ENCODE measurements at regions of chrX and their contacts with region 1.

Region 1: DNA sequence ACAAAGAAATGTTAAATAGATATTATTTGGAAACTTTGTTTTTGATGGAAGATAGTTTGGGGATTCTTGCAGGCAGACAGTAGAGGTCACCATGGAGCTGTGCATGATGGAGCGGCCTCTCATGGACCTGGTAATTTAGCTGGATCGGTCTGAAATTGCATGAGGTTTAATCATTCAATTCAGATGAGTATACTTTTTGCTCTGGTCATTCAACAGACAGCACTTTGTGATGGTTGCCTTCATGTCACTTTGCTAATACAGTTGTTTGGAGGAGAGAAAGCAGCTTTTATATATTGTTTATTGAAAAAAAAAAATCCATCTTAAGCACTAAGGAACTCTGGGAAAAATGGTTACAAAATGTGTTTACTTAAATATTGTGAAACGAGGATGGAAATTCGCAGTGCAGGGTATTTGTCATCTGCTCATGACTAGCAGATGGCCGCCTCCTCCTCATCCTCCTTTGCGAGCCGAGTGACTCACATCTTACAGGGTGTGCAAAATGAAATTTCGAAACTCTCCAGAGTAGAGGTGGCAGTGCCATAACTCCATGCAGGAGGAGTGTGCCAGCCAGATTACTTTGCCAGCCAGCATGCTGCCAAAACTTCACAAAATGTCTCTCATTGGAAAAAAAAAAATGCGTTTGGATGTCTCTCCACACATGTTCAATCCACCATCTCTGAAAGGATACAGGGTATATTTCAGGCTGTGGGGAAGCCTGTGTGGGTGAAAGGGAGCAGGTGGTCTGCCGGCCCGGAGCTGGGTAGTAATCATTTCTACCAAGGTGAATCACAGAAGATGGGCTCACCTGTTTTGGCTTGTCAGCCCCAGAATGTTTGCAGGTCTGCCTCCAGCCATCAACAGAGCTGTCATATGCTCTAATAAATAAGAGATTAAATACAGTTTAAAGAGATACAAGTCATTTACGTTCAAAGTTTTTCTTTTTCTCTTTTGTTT is 314.9 kb upstream of the DIPK2B start:
- DNase-seq: peak; percentile 56 to 95
- ATAC-seq: peak; percentile 95 to 99
- H3K4me3 ChIP-seq: peak overlapping the region; percentile 18; the same call in 1 of the 3 replicates
- H3K27ac ChIP-seq: peak overlapping the region; percentile 79 to 96
- H3K4me1 ChIP-seq: peaks cover 40% of the 10 kb centered on the region
- CTCF ChIP-seq: peak; percentile 79
- EP300 ChIP-seq: peak; percentile 91; a peak in 3 of 5 replicates
- POLR2A ChIP-seq: no peak
- RAD21 ChIP-seq: peak; percentile 90 to 91

Region 2: GRCh38 chrX:45479835-45480422 is 35.6 kb before region 1 on chrX:
- CTCF ChIA-PET with region 1: interaction called, 10 read pairs
- POLR2A ChIA-PET with region 1: interaction called, 20 read pairs
- DNase-seq: peak; percentile 55 to 96
- ATAC-seq: peak; percentile 95 to 96
- H3K4me3 ChIP-seq: no peak overlapping the region
- H3K27ac ChIP-seq: peak overlapping the region; percentile 74 to 93
- H3K4me1 ChIP-seq: peaks cover 19% of the 10 kb centered on the region
- CTCF ChIP-seq: no peak
- EP300 ChIP-seq: peak; percentile 92 to 97
- POLR2A ChIP-seq: no peak
- RAD21 ChIP-seq: peak; percentile 17 to 52; a peak in 4 of 5 replicates

Region 3: DNA sequence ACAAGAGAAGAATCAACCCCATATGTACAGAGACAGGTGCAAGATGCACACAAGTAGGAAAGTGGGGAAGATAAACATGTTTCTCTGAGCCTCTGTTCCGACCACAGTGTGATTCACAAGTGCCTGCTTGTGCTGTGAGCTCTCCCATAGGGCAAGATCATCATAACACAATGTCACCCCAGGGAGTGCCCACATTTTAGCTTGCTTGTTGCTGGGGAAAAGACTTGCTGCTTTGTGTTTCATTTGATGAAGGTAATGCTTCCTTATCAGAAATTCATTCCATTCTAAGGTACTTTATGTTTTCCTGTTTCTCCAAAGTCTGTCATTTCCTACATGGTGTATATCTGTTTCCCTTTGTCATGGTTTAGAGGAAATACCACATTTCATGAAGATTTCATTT is 10.3 kb before region 1 on chrX:
- CTCF ChIA-PET with region 1: interaction called, 11 read pairs
- POLR2A ChIA-PET with region 1: interaction called, 5 read pairs
- DNase-seq: peak in 1 of 2 experiments; percentile 31
- ATAC-seq: no peak
- H3K4me3 ChIP-seq: no peak overlapping the region
- H3K27ac ChIP-seq: peak overlapping the region; percentile 74 to 88; a peak in 5 of 6 replicates
- H3K4me1 ChIP-seq: peaks cover 33% of the 10 kb centered on the region
- CTCF ChIP-seq: no peak
- EP300 ChIP-seq: no peak
- POLR2A ChIP-seq: no peak
- RAD21 ChIP-seq: no peak

Region 4: DNA sequence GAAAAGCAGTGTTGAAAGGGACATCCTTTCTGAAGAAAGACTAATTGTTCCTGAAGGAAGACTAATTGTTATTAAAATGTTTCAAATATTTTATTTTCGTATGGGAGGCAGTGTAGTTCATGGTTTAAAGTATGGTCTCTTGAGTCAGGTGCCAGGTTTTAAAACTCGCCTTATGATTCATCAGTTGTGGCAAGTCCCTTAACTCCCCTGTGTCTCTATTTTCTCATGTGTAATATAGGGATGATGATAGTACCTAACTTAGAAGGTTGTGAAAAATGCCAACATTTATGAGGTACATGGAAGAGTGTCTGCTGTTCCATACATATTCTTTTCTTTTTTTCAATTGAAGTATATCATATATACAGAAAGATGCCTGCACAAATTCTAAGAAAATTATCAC is 99.3 kb after region 1 on chrX:
- CTCF ChIA-PET with region 1: no interaction called
- POLR2A ChIA-PET with region 1: no interaction called
- DNase-seq: no peak
- ATAC-seq: no peak
- H3K4me3 ChIP-seq: no peak overlapping the region
- H3K27ac ChIP-seq: no peak overlapping the region
- H3K4me1 ChIP-seq: no peaks in the 10 kb centered on the region
- CTCF ChIP-seq: no peak
- EP300 ChIP-seq: no peak
- POLR2A ChIP-seq: no peak
- RAD21 ChIP-seq: no peak

Region 5: DNA sequence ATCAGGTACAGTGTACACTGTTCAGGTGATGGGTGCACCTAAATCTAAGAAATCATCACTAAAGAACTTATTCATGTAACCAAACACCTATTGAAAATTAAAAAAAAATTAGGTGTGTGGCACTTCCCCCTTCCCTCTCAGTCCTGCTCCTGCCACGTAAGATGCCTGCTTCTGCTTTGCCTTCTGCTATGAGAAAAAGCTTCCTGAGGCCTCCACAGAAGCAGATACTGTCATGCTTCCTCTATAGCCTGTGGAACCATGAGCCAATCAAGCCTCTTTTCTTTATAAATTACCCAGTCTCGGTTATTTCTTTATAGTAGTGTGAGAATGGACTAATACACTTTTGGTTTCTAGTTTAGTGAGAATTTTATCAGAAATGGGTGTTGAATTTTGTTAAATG is 144.9 kb after region 1 on chrX:
- CTCF ChIA-PET with region 1: no interaction called
- POLR2A ChIA-PET with region 1: no interaction called
- DNase-seq: no peak
- ATAC-seq: no peak
- H3K4me3 ChIP-seq: no peak overlapping the region
- H3K27ac ChIP-seq: no peak overlapping the region
- H3K4me1 ChIP-seq: no peaks in the 10 kb centered on the region
- CTCF ChIP-seq: no peak
- EP300 ChIP-seq: no peak
- POLR2A ChIP-seq: no peak
- RAD21 ChIP-seq: no peak

Region 6: DNA sequence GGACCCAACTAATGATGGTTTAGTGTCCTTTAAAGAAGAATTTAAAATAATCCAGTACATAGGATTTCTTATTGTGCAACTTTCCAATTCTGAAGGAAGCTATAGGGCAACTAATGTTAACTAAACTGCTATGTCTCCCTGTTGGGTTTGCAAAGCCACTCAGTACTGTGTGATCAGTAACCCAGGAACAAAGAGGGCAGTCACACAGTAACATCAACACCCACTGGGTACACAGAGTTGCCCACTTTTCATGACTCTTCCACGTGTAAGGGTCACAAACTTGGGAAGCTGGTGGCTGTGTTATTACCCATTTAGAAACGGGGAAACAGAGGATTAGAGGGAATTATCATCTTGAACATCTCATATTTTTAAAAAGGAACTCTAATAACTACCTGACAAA is 240.2 kb after region 1 on chrX:
- CTCF ChIA-PET with region 1: interaction called, 10 read pairs
- POLR2A ChIA-PET with region 1: interaction called, 3 read pairs
- DNase-seq: no peak
- ATAC-seq: no peak
- H3K4me3 ChIP-seq: no peak overlapping the region
- H3K27ac ChIP-seq: peak overlapping the region in 1 of 2 experiments; percentile 40; a peak in 1 of 6 replicates
- H3K4me1 ChIP-seq: peaks cover 64% of the 10 kb centered on the region
- CTCF ChIP-seq: no peak
- EP300 ChIP-seq: no peak
- POLR2A ChIP-seq: no peak
- RAD21 ChIP-seq: no peak

Region 7: GRCh38 chrX:46408553-46409407 is 893.2 kb after region 1 on chrX:
- CTCF ChIA-PET with region 1: interaction called, 10 read pairs
- POLR2A ChIA-PET with region 1: interaction called, 4 read pairs
- DNase-seq: peak; percentile 35 to 76
- ATAC-seq: peak; percentile 64 to 72
- H3K4me3 ChIP-seq: no peak overlapping the region
- H3K27ac ChIP-seq: peak overlapping the region; percentile 28 to 58; a peak in 5 of 6 replicates
- H3K4me1 ChIP-seq: peaks cover 7% of the 10 kb centered on the region; the same call in 1 of the 3 replicates
- CTCF ChIP-seq: peak; percentile 89
- EP300 ChIP-seq: no peak
- POLR2A ChIP-seq: no peak
- RAD21 ChIP-seq: peak; percentile 94 to 96